ENCODE measurements at regions of chr3 and their contacts with region 1.

Region 1: DNA sequence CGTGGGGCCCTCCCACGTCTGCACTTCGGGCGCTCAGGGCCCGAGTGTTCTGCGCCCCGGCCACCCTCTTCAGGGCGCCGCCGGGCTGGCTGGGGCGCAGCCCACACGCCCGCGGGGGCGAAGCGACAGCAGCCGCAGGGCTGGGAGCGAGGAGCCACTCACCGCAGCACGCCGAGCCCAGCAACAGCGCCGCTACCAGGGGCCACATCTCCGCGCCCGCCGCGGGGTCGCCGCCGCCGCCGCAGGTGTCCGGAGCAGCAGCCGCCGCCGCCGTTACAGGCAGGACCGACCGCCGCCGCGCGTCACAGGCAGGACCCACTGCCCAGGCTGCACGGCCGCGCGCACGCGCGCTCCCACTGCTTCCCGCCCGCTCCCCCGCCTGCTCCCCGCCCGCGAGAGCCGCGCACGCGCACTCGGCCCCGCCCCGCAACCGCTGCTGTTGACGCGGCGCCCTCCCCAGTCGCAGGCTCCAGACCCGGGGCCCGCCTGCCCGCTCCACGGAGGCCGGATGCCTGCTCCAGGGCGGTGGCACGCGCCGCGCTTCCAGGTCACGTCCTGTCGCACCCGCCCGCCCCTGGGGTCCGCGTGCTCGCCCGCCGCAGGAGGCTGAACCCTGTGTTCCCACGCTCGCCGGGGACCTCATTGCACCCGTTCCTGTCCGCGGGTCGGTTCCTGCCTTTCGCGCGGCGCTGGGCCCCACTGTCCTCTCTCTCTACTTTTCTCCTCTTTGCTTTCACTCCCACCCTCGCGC is at the start of gene CD47:
- DNase-seq: peak; percentile 95
- H3K4me3 Mint-ChIP-seq: peak within 1 kb of the TSS; percentile 99
- H3K27ac Mint-ChIP-seq: peak within 1 kb of the TSS; percentile 100
- H3K4me1 Mint-ChIP-seq: peaks cover 29% of the 10 kb centered on the region
- H3K27me3 Mint-ChIP-seq: peaks cover 2% of the 10 kb centered on the region
- total RNA-seq, gene CD47: 145 and 146 TPM in 2 replicates

Region 2: DNA sequence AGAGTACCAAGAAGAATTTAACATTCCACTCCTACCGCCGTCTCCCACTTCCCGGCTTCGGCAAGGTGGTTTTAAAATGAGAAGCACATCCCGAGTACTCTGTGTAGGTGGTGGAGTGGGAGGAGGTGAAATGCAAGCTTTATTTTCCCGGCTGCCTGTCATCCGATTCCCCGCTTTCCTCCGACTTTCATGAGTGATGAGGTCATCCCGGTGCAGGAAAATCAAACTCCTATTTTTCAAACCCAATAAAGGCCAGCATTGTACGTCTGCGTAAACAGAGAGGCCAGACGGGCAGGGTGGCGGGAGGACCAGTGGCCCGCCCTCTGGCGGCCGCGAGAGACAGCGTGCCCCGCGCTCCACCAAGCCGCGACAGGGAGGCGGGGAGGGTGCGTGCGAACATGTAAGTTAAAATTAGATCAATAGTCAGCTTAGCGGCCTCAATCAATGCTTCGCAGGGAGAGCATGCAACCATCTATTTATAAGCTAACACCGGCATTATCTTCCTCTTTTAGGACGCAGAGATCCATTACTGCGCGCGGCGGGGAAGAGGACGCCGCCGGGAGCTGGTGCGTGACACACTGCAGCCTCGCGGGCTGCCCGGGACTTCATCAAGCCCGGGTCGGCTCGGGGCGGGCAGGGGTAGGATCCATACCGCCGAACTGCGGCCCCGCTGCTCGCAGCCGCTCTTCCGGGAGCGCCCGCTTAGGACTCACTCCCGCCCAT is 163.4 kb before region 1 on chr3:
- intact Hi-C with region 1: loop called (anchors 5 kb)
- DNase-seq: peak; percentile 56
- H3K4me3 Mint-ChIP-seq: peak overlapping the region; percentile 90
- H3K27ac Mint-ChIP-seq: peak overlapping the region; percentile 77
- H3K4me1 Mint-ChIP-seq: peaks cover 15% of the 10 kb centered on the region
- H3K27me3 Mint-ChIP-seq: peaks cover 14% of the 10 kb centered on the region

Region 3: DNA sequence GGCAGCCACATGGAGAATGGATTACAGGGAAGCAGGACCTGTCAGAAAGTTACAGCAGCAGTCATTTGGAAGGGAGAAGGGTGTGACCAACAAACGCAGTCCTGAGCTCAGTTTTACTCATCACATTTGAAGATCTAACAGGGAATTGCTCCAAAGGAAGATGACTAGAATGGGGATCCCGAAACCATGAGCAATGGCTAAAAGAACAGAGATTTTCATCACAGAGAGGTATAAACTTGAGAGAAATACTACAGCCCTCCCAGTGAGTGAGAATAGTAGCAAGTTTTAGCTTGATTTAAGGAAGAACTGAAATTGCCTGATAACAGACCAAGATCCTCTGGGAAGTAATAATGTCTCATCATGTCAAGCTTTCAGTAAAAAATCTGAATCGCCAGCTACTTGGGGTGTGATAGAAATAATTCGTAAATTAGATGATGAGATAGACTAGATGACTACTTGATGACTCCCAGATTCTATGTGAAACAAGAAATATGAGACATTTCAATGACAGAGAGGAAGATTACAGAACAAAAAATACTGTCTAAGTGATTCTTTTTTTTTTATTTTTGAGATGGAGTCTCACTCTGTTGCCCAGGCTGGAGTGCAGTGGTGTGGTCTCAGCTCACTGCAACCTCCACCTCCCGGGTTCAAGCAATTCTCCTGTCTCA is 17.0 kb before region 1 on chr3:
- intact Hi-C with region 1: no loop called
- DNase-seq: no peak
- H3K4me3 Mint-ChIP-seq: no peak overlapping the region
- H3K27ac Mint-ChIP-seq: peak overlapping the region; percentile 39
- H3K4me1 Mint-ChIP-seq: peaks cover 60% of the 10 kb centered on the region
- H3K27me3 Mint-ChIP-seq: no peaks in the 10 kb centered on the region

Region 4: DNA sequence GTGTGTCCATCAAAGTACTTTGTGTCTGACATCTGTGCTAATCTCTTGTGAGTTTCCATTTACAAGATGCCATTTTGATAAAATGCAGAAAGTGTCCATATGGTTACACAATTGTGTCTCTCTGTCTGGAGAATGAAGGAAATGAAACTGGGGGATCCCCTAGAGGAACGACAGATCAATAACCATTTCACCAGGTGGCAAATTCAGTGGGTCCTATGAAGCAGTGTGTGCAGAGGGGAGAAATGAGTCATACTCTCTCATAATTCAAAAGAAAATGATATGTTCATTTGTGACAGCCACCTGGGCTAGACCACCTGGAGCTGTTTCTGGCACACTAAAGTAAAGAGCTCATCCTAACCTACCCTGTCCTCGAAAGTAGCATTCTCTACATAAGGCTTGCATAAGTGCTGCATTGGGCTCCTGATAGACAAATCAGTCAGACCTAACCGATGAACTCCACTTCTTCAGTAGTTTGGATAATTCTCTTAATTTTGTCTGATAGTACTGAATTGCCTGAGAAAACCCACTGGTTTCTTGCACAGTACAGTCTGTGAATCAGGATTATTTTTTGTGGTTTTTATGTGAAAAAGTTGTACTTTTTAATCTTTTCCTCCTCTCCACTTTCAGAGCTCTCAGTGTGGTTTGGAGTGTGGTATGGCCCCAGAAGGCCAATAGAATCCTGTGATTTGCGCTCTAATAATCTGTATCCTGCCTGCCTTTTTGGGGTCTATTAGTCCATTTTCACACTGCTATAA is 10.2 kb after region 1 on chr3:
- intact Hi-C with region 1: loop called (anchors 1 kb)
- DNase-seq: no peak
- H3K4me3 Mint-ChIP-seq: peak overlapping the region; percentile 34
- H3K27ac Mint-ChIP-seq: peak overlapping the region; percentile 69
- H3K4me1 Mint-ChIP-seq: peaks cover 45% of the 10 kb centered on the region
- H3K27me3 Mint-ChIP-seq: peaks cover 2% of the 10 kb centered on the region

Region 5: GRCh38 chr3:108221911-108222852 is 131.3 kb after region 1 on chr3 and contains the start of gene IFT57:
- intact Hi-C with region 1: loop called (anchors 2 kb)
- DNase-seq: peak; percentile 93
- H3K4me3 Mint-ChIP-seq: peak within 1 kb of the TSS; percentile 94
- H3K27ac Mint-ChIP-seq: peak within 1 kb of the TSS; percentile 89
- H3K4me1 Mint-ChIP-seq: peaks cover 41% of the 10 kb centered on the region
- H3K27me3 Mint-ChIP-seq: peaks cover 2% of the 10 kb centered on the region
- total RNA-seq, gene IFT57: 21.6 and 22.0 TPM in 2 replicates

Region 6: GRCh38 chr3:108589146-108589997 is 498.5 kb after region 1 on chr3 and contains the starts of genes CIP2A and DZIP3:
- intact Hi-C with region 1: loop called (anchors 2 kb)
- DNase-seq: peak; percentile 81
- H3K4me3 Mint-ChIP-seq: peak within 1 kb of the TSS; percentile 99
- H3K27ac Mint-ChIP-seq: peak within 1 kb of the TSS; percentile 99
- H3K4me1 Mint-ChIP-seq: peaks cover 46% of the 10 kb centered on the region
- H3K27me3 Mint-ChIP-seq: no peaks in the 10 kb centered on the region
- total RNA-seq, gene CIP2A: 45.6 and 53.2 TPM in 2 replicates
- total RNA-seq, gene DZIP3: 4.9 and 6.4 TPM in 2 replicates

Measured in activated T-helper 2 cell treated with anti-CD3 and anti-CD28 coated beads, Interferon-gamma antibody, Interleukin-2, Interleukin-4, amounts not matched to agents 10 μg/mL and 5 μg/mL and 100 μg/mL, durations not matched to agents 14 hours and 24 hours and 36 hours (primary cell).